ENCODE measurements at regions of chr11 and their contacts with region 1.

Region 1: GRCh38 chr11:29159552-29160465 is 857.0 kb downstream of the KCNA4 start:
- DNase-seq: peak; percentile 98
- H3K4me3 ChIP-seq: no peak overlapping the region
- H3K27ac ChIP-seq: no peak overlapping the region
- H3K4me1 ChIP-seq: peaks cover 35% of the 10 kb centered on the region
- H3K27me3 ChIP-seq: no peaks in the 10 kb centered on the region
- CTCF ChIP-seq: peak; percentile 100

Region 2: GRCh38 chr11:27795955-27796861 is 1363.6 kb before region 1 on chr11:
- CTCF ChIA-PET with region 1: interaction called, 10 read pairs
- POLR2A ChIA-PET with region 1: no interaction called
- intact Hi-C with region 1: no loop called
- DNase-seq: no peak
- H3K4me3 ChIP-seq: no peak overlapping the region
- H3K27ac ChIP-seq: no peak overlapping the region
- H3K4me1 ChIP-seq: no peaks in the 10 kb centered on the region
- H3K27me3 ChIP-seq: peaks cover 31% of the 10 kb centered on the region
- CTCF ChIP-seq: no peak

Region 3: DNA sequence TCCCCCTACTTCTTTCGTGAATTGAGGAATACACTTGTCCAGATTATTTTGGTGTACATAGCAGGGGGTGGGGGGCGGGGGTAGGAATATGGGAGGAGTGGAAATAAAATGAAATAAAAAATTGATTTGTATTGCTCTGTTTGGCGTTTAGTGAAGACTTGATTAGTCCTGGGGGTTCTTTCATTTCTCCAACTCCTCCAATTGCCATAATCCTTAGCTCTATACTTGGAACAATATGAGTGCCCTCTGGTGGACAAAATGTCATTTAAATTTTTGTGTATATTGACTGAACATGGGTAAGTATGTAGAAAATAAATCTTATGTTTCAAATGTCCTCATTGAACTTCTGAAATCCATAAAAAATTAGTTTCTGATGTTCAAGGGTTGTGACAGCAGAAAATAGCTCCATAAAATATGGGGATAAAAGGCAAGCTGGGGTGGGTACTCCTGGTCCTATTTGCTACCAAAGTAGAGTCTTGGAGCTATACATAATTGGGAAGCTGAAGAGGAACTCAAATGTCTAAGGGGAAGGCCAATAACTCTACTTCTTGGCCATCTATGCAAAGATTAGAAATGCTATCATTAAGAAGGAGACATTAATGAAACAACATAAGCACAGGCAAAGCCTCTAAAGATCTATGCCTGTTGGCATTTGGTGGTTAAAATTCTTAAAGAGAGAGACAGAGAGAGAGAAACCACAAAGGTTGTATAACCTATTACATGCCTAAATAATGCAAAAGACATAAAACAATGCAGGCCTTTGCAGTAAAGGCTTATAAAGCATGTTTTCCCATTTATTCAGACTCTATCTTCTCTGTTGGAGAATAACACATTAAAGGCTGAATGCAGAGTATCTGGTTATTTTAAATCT is 630.0 kb before region 1 on chr11:
- CTCF ChIA-PET with region 1: interaction called, 9 read pairs
- POLR2A ChIA-PET with region 1: no interaction called
- intact Hi-C with region 1: loop called (anchors 5 kb)
- DNase-seq: peak; percentile 89
- H3K4me3 ChIP-seq: no peak overlapping the region
- H3K27ac ChIP-seq: no peak overlapping the region
- H3K4me1 ChIP-seq: no peaks in the 10 kb centered on the region
- H3K27me3 ChIP-seq: peaks cover 38% of the 10 kb centered on the region
- CTCF ChIP-seq: peak; percentile 93

Region 4: DNA sequence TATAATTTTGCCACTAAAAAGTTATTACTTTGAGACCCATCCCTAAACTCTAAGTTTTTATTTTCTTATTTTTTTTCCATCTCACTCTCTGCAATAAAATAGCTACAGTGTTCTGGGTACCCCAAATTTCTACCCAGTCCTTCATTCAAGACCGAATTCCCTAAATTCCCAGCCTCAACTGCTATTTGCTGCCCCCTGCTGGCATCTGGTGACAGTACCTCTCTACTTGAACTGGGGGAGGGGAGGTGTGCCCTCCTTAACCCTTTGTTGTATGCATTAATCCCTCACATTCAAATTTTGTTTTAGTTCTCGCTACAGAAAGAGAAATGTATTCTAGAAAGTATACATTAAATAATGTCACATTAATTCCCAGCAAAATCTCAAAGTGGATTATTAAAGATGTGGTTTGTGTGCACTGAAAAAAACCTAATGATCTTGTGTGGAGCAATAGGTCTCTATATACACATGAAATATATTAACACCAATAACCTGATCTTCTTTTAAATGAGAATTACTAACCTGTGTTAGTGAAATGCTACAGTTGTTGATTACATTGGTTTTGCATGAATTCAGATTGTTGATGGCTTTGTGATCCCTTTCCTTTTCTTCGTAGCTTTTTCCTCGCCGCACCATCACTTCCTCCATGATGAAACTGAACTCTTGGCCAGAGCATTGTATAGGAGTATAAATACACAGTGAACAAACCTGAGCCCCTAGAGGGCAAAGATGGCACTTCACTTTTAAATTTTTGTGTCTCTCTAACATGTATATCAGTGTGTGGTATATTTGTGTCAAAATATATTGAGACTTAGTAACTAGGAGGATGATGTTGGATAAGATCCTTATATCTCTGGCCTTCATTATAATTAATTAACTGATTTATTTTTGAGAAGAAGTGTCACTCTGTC is 461.6 kb before region 1 on chr11:
- CTCF ChIA-PET with region 1: interaction called, 9 read pairs
- POLR2A ChIA-PET with region 1: no interaction called
- intact Hi-C with region 1: loop called (anchors 2 kb)
- DNase-seq: peak; percentile 93
- H3K4me3 ChIP-seq: no peak overlapping the region
- H3K27ac ChIP-seq: no peak overlapping the region
- H3K4me1 ChIP-seq: peaks cover 13% of the 10 kb centered on the region
- H3K27me3 ChIP-seq: no peaks in the 10 kb centered on the region
- CTCF ChIP-seq: peak; percentile 100

Region 5: DNA sequence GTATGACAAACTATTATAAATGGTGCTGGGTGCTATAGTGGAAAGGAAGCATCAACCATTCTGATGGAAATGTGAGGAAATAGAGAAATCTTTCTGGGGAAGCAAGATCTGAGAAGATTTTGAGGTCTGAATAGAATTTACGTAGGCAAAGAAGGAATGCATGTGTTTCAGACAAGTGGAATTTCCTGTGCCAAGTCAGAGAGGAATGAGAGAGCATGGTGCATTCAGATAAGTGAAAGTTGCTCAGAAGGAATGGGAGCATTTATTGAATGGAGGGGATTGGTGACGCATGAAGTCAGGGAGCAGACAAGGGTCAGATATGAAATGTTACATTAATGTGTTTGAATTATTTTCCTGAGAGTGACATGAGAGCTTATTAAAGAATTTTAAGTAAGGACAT is 326.1 kb before region 1 on chr11:
- CTCF ChIA-PET with region 1: interaction called, 4 read pairs
- POLR2A ChIA-PET with region 1: no interaction called
- intact Hi-C with region 1: loop called (anchors 1 kb)
- DNase-seq: peak; percentile 97
- H3K4me3 ChIP-seq: no peak overlapping the region
- H3K27ac ChIP-seq: peak overlapping the region; percentile 86
- H3K4me1 ChIP-seq: peaks cover 68% of the 10 kb centered on the region
- H3K27me3 ChIP-seq: no peaks in the 10 kb centered on the region
- CTCF ChIP-seq: no peak

Region 6: GRCh38 chr11:28887681-28888080 is 272.1 kb before region 1 on chr11:
- CTCF ChIA-PET with region 1: no interaction called
- POLR2A ChIA-PET with region 1: no interaction called
- intact Hi-C with region 1: no loop called
- DNase-seq: no peak
- H3K4me3 ChIP-seq: no peak overlapping the region
- H3K27ac ChIP-seq: no peak overlapping the region
- H3K4me1 ChIP-seq: no peaks in the 10 kb centered on the region
- H3K27me3 ChIP-seq: no peaks in the 10 kb centered on the region
- CTCF ChIP-seq: no peak

Region 7: GRCh38 chr11:29019960-29020683 is 139.7 kb before region 1 on chr11:
- CTCF ChIA-PET with region 1: interaction called, 9 read pairs
- POLR2A ChIA-PET with region 1: no interaction called
- intact Hi-C with region 1: loop called (anchors 5 kb)
- DNase-seq: peak; percentile 82
- H3K4me3 ChIP-seq: no peak overlapping the region
- H3K27ac ChIP-seq: no peak overlapping the region
- H3K4me1 ChIP-seq: no peaks in the 10 kb centered on the region
- H3K27me3 ChIP-seq: no peaks in the 10 kb centered on the region
- CTCF ChIP-seq: peak; percentile 97

Region 8: GRCh38 chr11:29075726-29076125 is 84.1 kb before region 1 on chr11:
- CTCF ChIA-PET with region 1: no interaction called
- POLR2A ChIA-PET with region 1: no interaction called
- intact Hi-C with region 1: no loop called
- DNase-seq: no peak
- H3K4me3 ChIP-seq: no peak overlapping the region
- H3K27ac ChIP-seq: no peak overlapping the region
- H3K4me1 ChIP-seq: no peaks in the 10 kb centered on the region
- H3K27me3 ChIP-seq: no peaks in the 10 kb centered on the region
- CTCF ChIP-seq: no peak

Region 9: GRCh38 chr11:29087200-29087812 is 72.5 kb before region 1 on chr11:
- CTCF ChIA-PET with region 1: no interaction called
- POLR2A ChIA-PET with region 1: no interaction called
- intact Hi-C with region 1: no loop called
- DNase-seq: no peak
- H3K4me3 ChIP-seq: no peak overlapping the region
- H3K27ac ChIP-seq: no peak overlapping the region
- H3K4me1 ChIP-seq: no peaks in the 10 kb centered on the region
- H3K27me3 ChIP-seq: no peaks in the 10 kb centered on the region
- CTCF ChIP-seq: no peak

Region 10: GRCh38 chr11:29328961-29329441 is 169.2 kb after region 1 on chr11:
- CTCF ChIA-PET with region 1: interaction called, 18 read pairs
- POLR2A ChIA-PET with region 1: no interaction called
- intact Hi-C with region 1: loop called (anchors 2 kb)
- DNase-seq: peak; percentile 90
- H3K4me3 ChIP-seq: no peak overlapping the region
- H3K27ac ChIP-seq: no peak overlapping the region
- H3K4me1 ChIP-seq: no peaks in the 10 kb centered on the region
- H3K27me3 ChIP-seq: peaks cover 35% of the 10 kb centered on the region
- CTCF ChIP-seq: peak; percentile 99

Measured in A673 (cell line).